Dendritic cell treated with granulocyte-macrophage colony-stimulating factor and Interleukin-4, amounts not matched to agents 40 ng/mL and 50 ng/mL, for 4 days (primary cell): ENCODE measurements at regions of chr3 and their contacts with region 1.

Region 1: GRCh38 chr3:56667973-56668579 is 15.0 kb downstream of the TASOR start:
- H3K4me3 Mint-ChIP-seq: no peak overlapping the region
- H3K27ac Mint-ChIP-seq: no peak overlapping the region
- H3K4me1 Mint-ChIP-seq: no peaks in the 10 kb centered on the region
- H3K27me3 Mint-ChIP-seq: no peaks in the 10 kb centered on the region

Region 2: GRCh38 chr3:56801662-56802377 is 133.7 kb after region 1 on chr3 and contains the start of gene ARHGEF3:
- intact Hi-C with region 1: no loop called
- H3K4me3 Mint-ChIP-seq: peak within 1 kb of the TSS; percentile 94
- H3K27ac Mint-ChIP-seq: peak within 1 kb of the TSS; percentile 68
- H3K4me1 Mint-ChIP-seq: peaks cover 22% of the 10 kb centered on the region
- H3K27me3 Mint-ChIP-seq: peaks cover 2% of the 10 kb centered on the region

Region 3: GRCh38 chr3:57244946-57245345 is 576.9 kb after region 1 on chr3:
- intact Hi-C with region 1: loop called (anchors 10 kb)
- H3K4me3 Mint-ChIP-seq: no peak overlapping the region
- H3K27ac Mint-ChIP-seq: no peak overlapping the region
- H3K4me1 Mint-ChIP-seq: no peaks in the 10 kb centered on the region
- H3K27me3 Mint-ChIP-seq: no peaks in the 10 kb centered on the region